IMR-90 (cell line): ENCODE measurements at regions of chr10 and their contacts with region 1.

Region 1: GRCh38 chr10:50316695-50317648 is 65.7 kb upstream of the ASAH2 start:
- DNase-seq: peak; percentile 38
- ATAC-seq: no peak
- H3K4me3 ChIP-seq: no peak overlapping the region
- H3K27ac ChIP-seq: no peak overlapping the region
- H3K4me1 ChIP-seq: peaks cover 2% of the 10 kb centered on the region; the same call in 1 of the 2 replicates
- H3K27me3 ChIP-seq: no peaks in the 10 kb centered on the region
- CTCF ChIP-seq: no peak
- POLR2A ChIP-seq: no peak
- RAD21 ChIP-seq: no peak

Region 2: DNA sequence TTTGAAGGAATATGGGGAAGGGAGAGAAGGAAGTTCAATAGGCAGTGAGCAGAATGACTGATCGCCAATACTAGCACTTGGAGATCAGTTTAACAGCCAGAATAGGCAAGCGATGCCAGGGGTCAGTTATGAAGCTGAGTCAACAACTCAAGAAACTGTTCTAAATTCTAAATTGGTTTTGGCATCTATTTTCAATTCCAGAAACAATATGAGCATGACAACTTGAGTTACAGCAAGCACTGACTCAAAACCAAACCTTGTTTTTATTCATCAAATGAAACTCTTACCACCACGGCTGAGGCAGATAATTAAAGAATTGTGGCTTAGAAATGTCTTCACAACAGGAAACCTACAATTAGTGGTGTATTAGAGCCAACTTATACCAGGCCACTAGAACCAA is 114.8 kb after region 1 on chr10:
- CTCF ChIA-PET with region 1: no interaction called
- POLR2A ChIA-PET with region 1: no interaction called
- dilution Hi-C with region 1: no loop called
- in situ Hi-C with region 1: no loop called
- intact Hi-C with region 1: loop called (anchors 5 kb)
- DNase-seq: no peak
- ATAC-seq: no peak
- H3K4me3 ChIP-seq: no peak overlapping the region
- H3K27ac ChIP-seq: no peak overlapping the region
- H3K4me1 ChIP-seq: peaks cover 5% of the 10 kb centered on the region
- H3K27me3 ChIP-seq: no peaks in the 10 kb centered on the region
- CTCF ChIP-seq: no peak
- POLR2A ChIP-seq: no peak
- RAD21 ChIP-seq: no peak